ENCODE measurements at regions of chrX and their contacts with region 1.

Region 1: DNA sequence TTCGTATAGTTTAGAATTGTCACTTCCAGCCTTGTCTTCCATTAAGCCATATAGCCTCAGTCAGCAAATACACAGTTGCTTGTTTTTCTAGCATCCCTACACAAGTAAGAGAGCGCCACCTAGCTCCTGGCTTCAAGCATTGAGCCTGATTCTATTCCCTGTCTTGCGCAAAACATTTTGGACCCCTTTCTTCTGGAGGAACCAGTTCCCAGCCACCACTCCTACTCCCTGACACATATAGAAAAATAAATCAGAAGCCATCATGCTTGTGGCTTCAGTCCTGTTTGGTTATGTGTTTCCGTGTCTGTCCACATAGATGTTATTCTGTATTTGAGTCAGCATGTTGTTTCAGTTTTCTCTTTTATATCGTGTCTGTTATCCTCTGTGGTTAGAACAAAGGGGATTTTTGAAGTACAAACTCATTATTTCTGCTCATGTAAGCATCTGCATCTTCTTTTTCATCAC is 59.9 kb downstream of the GK start:
- DNase-seq: peak in 6 of 9 donors; percentile 1 to 43 (median 16)
- ATAC-seq: peak; percentile 63
- H3K4me3 ChIP-seq: no peak overlapping the region
- H3K4me3 Mint-ChIP-seq: peak overlapping the region in 1 of 10 donors; percentile 73
- H3K27ac ChIP-seq: no peak overlapping the region
- H3K27ac Mint-ChIP-seq: peak overlapping the region in 2 of 9 donors; percentile 62 to 96
- H3K4me1 ChIP-seq: no peaks in the 10 kb centered on the region
- H3K4me1 Mint-ChIP-seq: peaks cover 0 to 60% (median 6%) of the 10 kb centered on the region in 7 donors
- H3K27me3 ChIP-seq: no peaks in the 10 kb centered on the region
- H3K27me3 Mint-ChIP-seq: no peaks in the 10 kb centered on the region

Region 2: GRCh38 chrX:30577362-30577991 is 135.6 kb before region 1 on chrX and contains the start of gene TASL:
- CTCF ChIA-PET with region 1: no interaction called
- POLR2A ChIA-PET with region 1: no interaction called
- intact Hi-C with region 1: loop called in 1 of 2 experiments (anchors 1 kb)
- DNase-seq: peak in 8 of 9 donors; percentile 23 to 53 (median 30)
- ATAC-seq: peak; percentile 85
- H3K4me3 ChIP-seq: peak within 1 kb of the TSS; percentile 58
- H3K4me3 Mint-ChIP-seq: peak within 1 kb of the TSS; percentile 82 to 96 (median 88)
- H3K27ac ChIP-seq: peak within 1 kb of the TSS; percentile 65
- H3K27ac Mint-ChIP-seq: peak within 1 kb of the TSS; percentile 88 to 99 (median 96)
- H3K4me1 ChIP-seq: no peaks in the 10 kb centered on the region
- H3K4me1 Mint-ChIP-seq: peaks cover 0 to 24% (median 18%) of the 10 kb centered on the region in 7 donors
- H3K27me3 ChIP-seq: no peaks in the 10 kb centered on the region
- H3K27me3 Mint-ChIP-seq: no peaks in the 10 kb centered on the region
- total RNA-seq, gene TASL: 2.1 to 10.5 (median 4.6) TPM

Region 3: DNA sequence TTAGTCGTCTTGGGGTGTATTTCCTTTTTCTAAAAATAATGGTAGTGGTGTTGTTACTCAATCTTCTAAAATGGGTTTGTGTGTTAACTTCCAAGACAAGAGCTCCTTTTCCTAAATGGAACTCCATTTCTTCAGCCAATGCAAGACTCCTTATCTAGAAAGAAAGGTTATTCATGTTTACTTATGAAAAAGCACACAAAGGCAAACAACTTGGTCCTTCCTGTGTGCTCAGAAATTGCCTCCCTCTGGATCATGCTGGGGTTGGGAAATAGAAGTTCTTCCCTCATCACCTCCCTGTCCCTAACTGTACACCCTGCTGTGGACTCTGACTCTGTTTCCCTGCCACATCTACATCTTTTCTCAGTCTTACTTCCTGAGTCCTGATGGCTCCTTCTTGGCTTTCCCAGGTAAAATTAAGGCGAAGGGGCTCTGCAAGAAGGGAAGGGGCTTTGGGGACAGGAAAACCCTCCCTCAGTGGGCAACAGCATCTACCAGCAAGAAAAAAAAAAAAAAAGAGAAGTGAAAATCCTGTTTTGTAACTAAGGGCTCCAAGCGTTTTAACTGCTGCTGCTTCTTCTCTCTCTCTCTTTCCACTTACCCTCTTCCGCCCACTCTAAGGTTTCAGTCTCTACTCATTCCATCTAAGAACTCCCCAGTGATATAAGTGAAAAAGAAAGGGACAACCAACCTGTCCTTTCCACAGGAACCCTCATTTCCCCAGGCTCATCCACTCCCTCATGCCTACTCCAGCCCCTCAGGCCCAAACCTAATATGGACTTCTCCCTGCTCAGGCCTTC is 115.7 kb before region 1 on chrX:
- CTCF ChIA-PET with region 1: no interaction called
- POLR2A ChIA-PET with region 1: no interaction called
- intact Hi-C with region 1: no loop called
- DNase-seq: no peak
- ATAC-seq: peak; percentile 22
- H3K4me3 ChIP-seq: no peak overlapping the region
- H3K4me3 Mint-ChIP-seq: no peak overlapping the region
- H3K27ac ChIP-seq: no peak overlapping the region
- H3K27ac Mint-ChIP-seq: peak overlapping the region in 1 of 9 donors; percentile 52
- H3K4me1 ChIP-seq: no peaks in the 10 kb centered on the region
- H3K4me1 Mint-ChIP-seq: peaks cover 0 to 20% (median 0%) of the 10 kb centered on the region in 7 donors
- H3K27me3 ChIP-seq: no peaks in the 10 kb centered on the region
- H3K27me3 Mint-ChIP-seq: no peaks in the 10 kb centered on the region

Region 4: DNA sequence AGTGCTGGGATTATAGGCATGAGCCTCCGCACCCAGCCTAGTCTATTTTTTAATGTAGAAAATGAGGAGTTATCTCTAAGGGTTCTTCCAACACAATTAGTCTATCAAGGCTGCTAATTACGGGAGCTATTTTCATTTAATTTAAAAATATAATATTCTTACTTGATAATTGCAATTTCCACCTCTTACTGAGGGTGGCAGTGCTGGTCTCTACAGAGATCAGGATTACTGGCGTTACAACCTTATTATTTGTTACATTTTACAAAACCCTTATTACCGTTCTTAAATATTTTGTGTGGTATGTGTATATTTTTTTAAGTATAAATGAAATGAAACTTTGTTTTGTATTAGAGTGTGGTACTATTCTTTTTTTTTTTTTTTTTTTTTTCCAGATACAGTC is 77.5 kb before region 1 on chrX:
- CTCF ChIA-PET with region 1: interaction called, 3 read pairs
- POLR2A ChIA-PET with region 1: no interaction called
- intact Hi-C with region 1: loop called (anchors 1 kb)
- DNase-seq: peak in 1 of 9 donors; percentile 14
- ATAC-seq: peak; percentile 46
- H3K4me3 ChIP-seq: no peak overlapping the region
- H3K4me3 Mint-ChIP-seq: no peak overlapping the region
- H3K27ac ChIP-seq: no peak overlapping the region
- H3K27ac Mint-ChIP-seq: no peak overlapping the region
- H3K4me1 ChIP-seq: no peaks in the 10 kb centered on the region
- H3K4me1 Mint-ChIP-seq: no peaks in the 10 kb centered on the region
- H3K27me3 ChIP-seq: no peaks in the 10 kb centered on the region
- H3K27me3 Mint-ChIP-seq: no peaks in the 10 kb centered on the region